ENCODE measurements at regions of chr14 and their contacts with region 1.

Region 1: GRCh38 chr14:75709207-75709812 is 48.3 kb downstream of the TTLL5 start:
- DNase-seq: peak; percentile 84 to 94
- H3K4me3 ChIP-seq: no peak overlapping the region
- H3K27ac ChIP-seq: peak overlapping the region in 1 of 5 donors; percentile 26
- H3K4me1 ChIP-seq: peaks cover 11 to 24% (median 18%) of the 10 kb centered on the region in 4 donors
- H3K27me3 ChIP-seq: no peaks in the 10 kb centered on the region
- CTCF ChIP-seq: peak in 5 of 7 experiments; percentile 57 to 77 (median 73)
- EP300 ChIP-seq: no peak
- POLR2A ChIP-seq: no peak

Region 2: GRCh38 chr14:75636100-75636692 is 73.1 kb before region 1 on chr14:
- intact Hi-C with region 1: no loop called
- DNase-seq: peak in 1 of 2 donors; percentile 40
- H3K4me3 ChIP-seq: no peak overlapping the region
- H3K27ac ChIP-seq: no peak overlapping the region
- H3K4me1 ChIP-seq: no peaks in the 10 kb centered on the region
- H3K27me3 ChIP-seq: peaks cover 0 to 24% (median 8%) of the 10 kb centered on the region in 3 donors
- CTCF ChIP-seq: no peak
- EP300 ChIP-seq: no peak
- POLR2A ChIP-seq: no peak

Region 3: GRCh38 chr14:75685910-75686309 is 23.4 kb before region 1 on chr14:
- intact Hi-C with region 1: no loop called
- DNase-seq: peak in 1 of 2 donors; percentile 32
- H3K4me3 ChIP-seq: no peak overlapping the region
- H3K27ac ChIP-seq: no peak overlapping the region
- H3K4me1 ChIP-seq: peaks cover 0 to 6% (median 0%) of the 10 kb centered on the region in 4 donors
- H3K27me3 ChIP-seq: no peaks in the 10 kb centered on the region
- CTCF ChIP-seq: no peak
- EP300 ChIP-seq: no peak
- POLR2A ChIP-seq: no peak

Region 4: GRCh38 chr14:75752907-75753594 is 43.7 kb after region 1 on chr14:
- intact Hi-C with region 1: no loop called
- DNase-seq: peak in 1 of 2 donors; percentile 3
- H3K4me3 ChIP-seq: no peak overlapping the region
- H3K27ac ChIP-seq: no peak overlapping the region
- H3K4me1 ChIP-seq: no peaks in the 10 kb centered on the region
- H3K27me3 ChIP-seq: no peaks in the 10 kb centered on the region
- CTCF ChIP-seq: no peak
- EP300 ChIP-seq: no peak
- POLR2A ChIP-seq: no peak

Region 5: GRCh38 chr14:75783184-75783583 is 73.9 kb after region 1 on chr14:
- intact Hi-C with region 1: loop called (anchors 10 kb)
- DNase-seq: no peak
- H3K4me3 ChIP-seq: no peak overlapping the region
- H3K27ac ChIP-seq: no peak overlapping the region
- H3K4me1 ChIP-seq: no peaks in the 10 kb centered on the region
- H3K27me3 ChIP-seq: no peaks in the 10 kb centered on the region
- CTCF ChIP-seq: no peak
- EP300 ChIP-seq: no peak
- POLR2A ChIP-seq: no peak

Region 6: DNA sequence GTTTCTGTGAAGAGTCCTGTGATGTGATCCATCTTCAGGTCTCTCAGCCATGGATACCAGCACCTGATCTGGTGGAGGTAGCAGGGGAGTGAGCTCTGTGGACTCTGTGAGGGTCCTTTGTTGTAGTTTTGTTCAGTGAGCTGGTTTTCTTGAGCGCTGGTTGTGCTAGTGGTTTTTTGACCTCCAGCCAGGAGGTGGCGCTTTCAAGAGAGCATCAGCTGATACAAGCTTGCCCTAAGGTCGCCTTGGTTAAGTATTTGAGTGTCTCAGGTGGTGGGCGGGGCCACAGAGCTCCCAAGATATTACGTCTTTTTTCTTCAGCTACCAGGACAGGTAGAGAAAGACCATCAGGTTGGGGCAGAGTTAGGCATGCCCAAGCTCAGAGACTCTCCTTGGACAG is 91.5 kb after region 1 on chr14:
- intact Hi-C with region 1: loop called (anchors 5 kb)
- DNase-seq: no peak
- H3K4me3 ChIP-seq: no peak overlapping the region
- H3K27ac ChIP-seq: no peak overlapping the region
- H3K4me1 ChIP-seq: no peaks in the 10 kb centered on the region
- H3K27me3 ChIP-seq: no peaks in the 10 kb centered on the region
- CTCF ChIP-seq: no peak
- EP300 ChIP-seq: no peak
- POLR2A ChIP-seq: no peak

Region 7: GRCh38 chr14:75982266-75983018 is 273.1 kb after region 1 on chr14:
- intact Hi-C with region 1: loop called (anchors 5 kb)
- DNase-seq: peak; percentile 85 to 94
- H3K4me3 ChIP-seq: peak overlapping the region; percentile 65 to 76 (median 70)
- H3K27ac ChIP-seq: peak overlapping the region; percentile 93 to 98 (median 96)
- H3K4me1 ChIP-seq: peaks cover 42 to 80% (median 70%) of the 10 kb centered on the region in 4 donors
- H3K27me3 ChIP-seq: no peaks in the 10 kb centered on the region
- CTCF ChIP-seq: peak in 5 of 7 experiments; percentile 23 to 84 (median 62)
- EP300 ChIP-seq: no peak
- POLR2A ChIP-seq: no peak

Region 8: DNA sequence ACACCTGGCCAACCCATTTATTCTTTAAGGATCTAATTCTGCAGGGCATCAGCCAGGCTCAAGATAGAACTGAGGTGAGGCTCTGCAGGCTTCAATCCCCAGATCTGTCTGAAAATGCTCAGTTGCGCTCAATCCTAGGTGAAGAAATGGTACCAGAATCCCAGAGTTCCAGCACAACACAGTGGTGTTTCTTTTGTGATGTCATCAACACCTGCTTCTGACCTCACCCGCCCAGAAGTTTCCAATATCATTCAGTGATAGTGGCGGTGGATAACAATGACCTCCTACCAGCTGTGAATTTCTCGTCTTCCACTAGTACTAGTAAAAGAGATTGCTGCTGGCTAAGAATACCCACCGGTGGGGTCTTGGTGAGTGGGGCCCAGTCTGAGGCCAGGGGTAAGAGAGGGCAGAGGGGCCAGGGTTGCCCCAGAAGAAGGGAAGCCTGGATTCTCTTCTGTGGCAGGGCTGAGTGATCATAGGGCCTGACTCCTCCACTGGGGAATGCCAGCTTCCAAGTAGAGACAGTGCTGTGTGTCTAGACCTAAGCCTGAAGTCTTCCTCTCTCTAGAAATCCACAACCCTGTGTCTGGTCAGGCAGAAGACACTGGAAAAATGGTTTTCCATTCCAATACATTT is 1466.4 kb after region 1 on chr14:
- intact Hi-C with region 1: no loop called
- DNase-seq: no peak
- H3K4me3 ChIP-seq: no peak overlapping the region
- H3K27ac ChIP-seq: no peak overlapping the region
- H3K4me1 ChIP-seq: no peaks in the 10 kb centered on the region
- H3K27me3 ChIP-seq: peaks cover 0 to 15% (median under 1%) of the 10 kb centered on the region in 3 donors
- CTCF ChIP-seq: no peak
- EP300 ChIP-seq: no peak
- POLR2A ChIP-seq: no peak

Measured in stomach (tissue), 19 donors.